Heart left ventricle (tissue), 16 donors: ENCODE measurements at regions of chr22 and their contacts with region 1.

Region 1: GRCh38 chr22:32628628-32629572 is 154.3 kb downstream of the FBXO7 start:
- DNase-seq: no peak
- ATAC-seq: no peak
- H3K4me3 ChIP-seq: no peak overlapping the region
- H3K27ac ChIP-seq: peak overlapping the region; percentile 55 to 96 (median 83)
- H3K4me1 ChIP-seq: peaks cover 9 to 71% (median 36%) of the 10 kb centered on the region in 12 donors
- H3K27me3 ChIP-seq: no peaks in the 10 kb centered on the region
- CTCF ChIP-seq: no peak
- POLR2A ChIP-seq: no peak

Region 2: DNA sequence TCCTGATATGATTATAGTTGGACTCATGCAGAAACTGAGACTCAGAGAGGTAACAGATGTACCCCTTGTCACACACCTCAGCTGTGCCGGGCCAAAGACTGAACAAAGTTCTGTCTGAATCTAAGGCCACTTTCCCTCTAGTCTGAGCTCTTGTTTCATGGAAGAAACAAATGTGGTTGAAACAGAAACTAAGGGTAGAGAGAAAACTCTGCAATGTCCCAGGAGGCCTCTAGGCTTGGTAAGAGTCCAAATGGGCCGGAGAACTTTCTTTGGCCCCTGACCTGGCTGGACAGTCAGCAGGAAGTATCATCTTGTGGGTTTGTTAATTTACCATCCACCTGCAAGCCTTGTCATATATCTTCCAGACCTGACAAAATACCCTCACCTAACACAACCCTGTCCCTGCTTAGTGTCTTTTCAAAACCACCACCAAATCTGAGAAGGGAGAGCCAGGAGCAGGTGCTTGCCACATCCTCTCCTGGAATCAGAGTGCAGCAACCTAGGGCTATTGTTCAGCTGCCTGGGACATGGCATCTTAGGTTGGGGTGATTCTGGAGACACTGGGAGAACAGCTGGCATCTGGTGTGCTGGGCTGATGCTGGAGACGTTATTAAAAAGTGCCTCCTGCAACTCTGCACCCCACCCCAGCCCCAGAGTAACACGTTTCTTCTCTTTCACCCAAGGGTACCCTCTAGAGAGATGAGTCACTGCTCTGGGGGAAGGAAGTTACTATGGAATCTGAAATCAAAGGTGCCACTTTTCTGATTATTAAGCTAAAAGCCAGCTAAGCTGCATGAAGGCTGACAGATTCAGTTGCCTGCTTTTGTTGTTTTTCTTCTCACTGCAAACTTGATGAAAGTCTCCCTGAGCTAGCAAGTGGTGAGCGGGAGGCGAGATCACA is 46.3 kb after region 1 on chr22:
- intact Hi-C with region 1: loop called in 1 of 10 experiments (anchors 1 kb)
- DNase-seq: peak in 3 of 5 donors; percentile 43 to 55 (median 49)
- ATAC-seq: peak in 1 of 4 donors; percentile 37
- H3K4me3 ChIP-seq: no peak overlapping the region
- H3K27ac ChIP-seq: no peak overlapping the region
- H3K4me1 ChIP-seq: peaks cover 0 to 14% (median 8%) of the 10 kb centered on the region in 12 donors
- H3K27me3 ChIP-seq: no peaks in the 10 kb centered on the region
- CTCF ChIP-seq: peak in 2 of 12 donors; percentile 9 to 15
- POLR2A ChIP-seq: no peak

Region 3: DNA sequence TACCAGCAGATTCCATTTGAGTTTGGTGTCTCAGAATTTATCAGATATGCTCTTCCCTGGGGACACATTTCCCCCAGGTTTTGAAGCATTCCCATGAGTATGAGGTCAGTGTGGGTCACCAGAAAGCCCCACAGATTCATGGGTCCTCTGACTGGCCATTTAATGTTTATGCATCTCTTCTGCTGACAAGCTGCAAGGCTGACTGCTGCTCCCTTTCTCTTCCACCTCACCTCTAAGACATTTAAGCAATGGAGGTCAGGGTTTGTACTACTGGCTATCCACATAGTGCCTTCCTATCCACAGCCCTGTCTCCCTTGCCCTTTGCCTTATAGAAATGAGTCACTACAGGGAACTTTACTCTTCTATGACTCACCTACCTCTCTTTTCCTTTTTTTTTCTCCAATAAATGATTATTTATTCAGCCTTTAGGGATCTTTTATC is 66.6 kb after region 1 on chr22:
- intact Hi-C with region 1: loop called in 2 of 10 experiments (anchors 1 to 5 kb)
- DNase-seq: no peak
- ATAC-seq: no peak
- H3K4me3 ChIP-seq: no peak overlapping the region
- H3K27ac ChIP-seq: no peak overlapping the region
- H3K4me1 ChIP-seq: peaks cover 0 to 26% (median 10%) of the 10 kb centered on the region in 12 donors
- H3K27me3 ChIP-seq: no peaks in the 10 kb centered on the region
- CTCF ChIP-seq: no peak
- POLR2A ChIP-seq: no peak